Activated B cell treated with CpG ODN at 0.5 μM for 24 hours (primary cell): ENCODE measurements at regions of chr4 and their contacts with region 1.

Region 1: DNA sequence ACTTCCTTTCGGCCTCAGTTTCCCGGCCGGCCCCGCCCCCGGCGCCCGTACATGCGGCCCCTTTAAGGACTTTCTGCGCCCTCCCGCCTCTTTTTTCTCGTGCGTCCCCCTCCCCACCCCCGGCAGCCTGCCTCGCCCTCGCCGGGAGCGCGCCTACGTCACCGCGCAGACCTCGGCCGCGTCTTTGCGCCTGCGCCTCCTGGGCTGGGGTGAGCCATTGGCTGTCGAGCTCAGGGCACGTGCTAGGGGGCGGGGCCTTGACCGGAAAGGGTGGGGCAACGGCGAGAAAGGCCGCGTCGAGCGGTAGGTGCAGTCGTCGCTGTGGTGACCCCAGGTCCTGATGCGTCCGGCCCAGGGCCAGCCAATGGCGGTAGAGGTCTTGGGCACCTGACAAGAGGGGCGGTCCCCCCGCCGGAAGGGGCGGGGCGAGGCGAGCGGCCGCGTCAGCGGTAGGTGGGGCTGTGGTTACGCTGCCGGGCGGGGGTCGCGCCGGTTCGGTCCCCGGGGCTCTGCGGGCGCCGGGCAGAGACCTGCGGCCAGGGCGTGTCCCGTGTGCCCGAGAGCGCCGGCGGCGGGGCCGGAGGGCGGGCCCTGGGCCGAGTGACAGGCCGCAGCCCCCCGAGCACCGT is at the start of gene UVSSA:
- DNase-seq: peak; percentile 100
- ATAC-seq: peak; percentile 91
- H3K4me3 Mint-ChIP-seq: peak within 1 kb of the TSS; percentile 90
- H3K27ac Mint-ChIP-seq: peak within 1 kb of the TSS; percentile 84
- H3K4me1 Mint-ChIP-seq: peaks cover 33% of the 10 kb centered on the region
- H3K27me3 Mint-ChIP-seq: no peaks in the 10 kb centered on the region
- CTCF ChIP-seq: no peak
- total RNA-seq, gene UVSSA: 31.7 and 35.2 TPM in 2 replicates

Region 2: DNA sequence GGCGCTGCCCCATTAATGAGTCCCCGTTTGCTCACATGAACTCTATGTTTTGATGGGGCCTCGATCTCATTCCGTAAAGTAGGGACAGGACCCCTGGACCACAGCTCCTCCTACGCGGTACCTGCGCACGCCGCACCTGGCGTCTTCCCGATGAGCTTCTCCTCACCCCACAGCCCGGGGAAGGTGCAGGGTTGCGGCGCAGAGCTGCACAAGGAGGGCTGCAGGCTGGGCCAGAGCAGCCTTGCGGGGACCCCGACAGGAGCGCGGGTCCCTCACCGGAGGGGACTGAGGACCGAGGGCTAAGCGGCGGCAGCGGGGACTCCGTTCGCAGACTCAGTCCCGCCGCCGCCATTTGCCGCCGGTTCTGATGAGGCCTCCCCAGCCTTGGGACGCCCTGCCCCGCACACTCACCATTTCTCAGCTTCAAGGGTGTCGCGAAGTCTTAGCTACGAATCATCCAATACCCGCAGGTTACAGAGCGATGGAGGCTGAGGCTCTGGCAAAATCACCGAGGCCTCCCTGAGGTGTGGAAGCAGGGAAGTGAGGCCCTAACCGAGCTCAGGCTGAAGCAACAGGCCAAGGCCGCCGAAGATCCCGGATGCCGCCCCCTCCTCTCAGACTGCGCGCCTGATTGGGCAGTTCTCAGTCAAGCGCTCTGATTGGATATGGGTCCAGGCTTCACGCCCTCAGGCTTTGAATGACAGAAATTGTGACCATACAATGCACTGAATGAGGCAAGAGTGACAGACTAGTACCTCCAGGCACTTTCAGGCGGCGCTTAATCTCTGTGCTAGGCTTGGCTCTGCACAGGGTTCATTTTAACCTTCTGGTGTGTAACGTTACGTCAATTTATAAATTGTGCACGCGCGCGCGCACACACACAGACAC is 873.1 kb before region 1 on chr4:
- CTCF ChIA-PET with region 1: no interaction called
- POLR2A ChIA-PET with region 1: no interaction called
- intact Hi-C with region 1: loop called (anchors 10 kb)
- DNase-seq: peak; percentile 80
- ATAC-seq: peak; percentile 98
- H3K4me3 Mint-ChIP-seq: peak overlapping the region; percentile 99
- H3K27ac Mint-ChIP-seq: peak overlapping the region; percentile 99
- H3K4me1 Mint-ChIP-seq: peaks cover 37% of the 10 kb centered on the region
- H3K27me3 Mint-ChIP-seq: no peaks in the 10 kb centered on the region
- CTCF ChIP-seq: no peak

Region 3: DNA sequence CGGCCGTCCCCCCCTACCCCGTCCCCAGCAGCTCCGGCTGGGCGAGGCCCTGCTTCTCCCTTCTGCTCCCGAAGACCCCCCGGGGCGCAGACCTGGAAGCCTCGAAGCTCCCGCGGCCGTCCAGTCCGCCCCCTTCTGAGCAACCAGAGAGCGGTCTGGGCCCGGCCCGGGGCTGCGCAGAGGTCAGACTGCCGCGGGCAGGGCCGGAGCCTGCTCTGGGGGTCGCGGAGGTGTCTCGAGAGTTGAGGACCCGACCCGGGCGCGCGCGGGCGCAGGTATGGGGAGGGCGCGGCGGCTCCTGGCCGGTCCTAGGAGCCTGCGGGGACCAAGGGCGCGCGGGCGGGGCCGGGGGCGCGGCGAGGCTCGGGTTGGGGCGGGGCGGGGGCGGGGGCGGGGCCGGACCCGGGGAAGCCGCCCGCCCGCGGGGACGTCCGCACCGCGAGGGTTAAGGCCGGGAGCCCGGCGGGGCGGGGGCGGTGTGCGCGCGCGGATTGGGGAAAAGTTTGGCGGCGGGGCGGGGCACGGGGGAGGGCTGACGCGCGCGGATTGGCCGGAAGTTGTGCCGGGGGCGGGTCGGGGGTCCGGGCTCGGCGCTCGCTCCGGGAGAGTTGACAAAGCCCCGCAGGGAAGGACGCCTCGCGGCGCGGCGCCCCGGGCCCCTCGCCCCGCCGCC is 335.7 kb before region 1 on chr4 and contains the start of gene FGFRL1:
- CTCF ChIA-PET with region 1: no interaction called
- POLR2A ChIA-PET with region 1: no interaction called
- intact Hi-C with region 1: loop called (anchors 2 kb)
- DNase-seq: peak; percentile 88
- ATAC-seq: peak; percentile 69
- H3K4me3 Mint-ChIP-seq: peak within 1 kb of the TSS; percentile 86
- H3K27ac Mint-ChIP-seq: peak within 1 kb of the TSS; percentile 55
- H3K4me1 Mint-ChIP-seq: peaks cover 15% of the 10 kb centered on the region
- H3K27me3 Mint-ChIP-seq: peaks cover 18% of the 10 kb centered on the region
- CTCF ChIP-seq: no peak
- total RNA-seq, gene FGFRL1: 4.2 and 5.6 TPM in 2 replicates

Region 4: GRCh38 chr4:1218634-1219565 is 128.0 kb before region 1 on chr4:
- CTCF ChIA-PET with region 1: no interaction called
- POLR2A ChIA-PET with region 1: interaction called, 4 read pairs
- intact Hi-C with region 1: loop called (anchors 1 kb)
- DNase-seq: peak; percentile 41
- ATAC-seq: peak; percentile 88
- H3K4me3 Mint-ChIP-seq: peak overlapping the region; percentile 75
- H3K27ac Mint-ChIP-seq: peak overlapping the region; percentile 81
- H3K4me1 Mint-ChIP-seq: peaks cover 64% of the 10 kb centered on the region
- H3K27me3 Mint-ChIP-seq: no peaks in the 10 kb centered on the region
- CTCF ChIP-seq: no peak

Region 5: DNA sequence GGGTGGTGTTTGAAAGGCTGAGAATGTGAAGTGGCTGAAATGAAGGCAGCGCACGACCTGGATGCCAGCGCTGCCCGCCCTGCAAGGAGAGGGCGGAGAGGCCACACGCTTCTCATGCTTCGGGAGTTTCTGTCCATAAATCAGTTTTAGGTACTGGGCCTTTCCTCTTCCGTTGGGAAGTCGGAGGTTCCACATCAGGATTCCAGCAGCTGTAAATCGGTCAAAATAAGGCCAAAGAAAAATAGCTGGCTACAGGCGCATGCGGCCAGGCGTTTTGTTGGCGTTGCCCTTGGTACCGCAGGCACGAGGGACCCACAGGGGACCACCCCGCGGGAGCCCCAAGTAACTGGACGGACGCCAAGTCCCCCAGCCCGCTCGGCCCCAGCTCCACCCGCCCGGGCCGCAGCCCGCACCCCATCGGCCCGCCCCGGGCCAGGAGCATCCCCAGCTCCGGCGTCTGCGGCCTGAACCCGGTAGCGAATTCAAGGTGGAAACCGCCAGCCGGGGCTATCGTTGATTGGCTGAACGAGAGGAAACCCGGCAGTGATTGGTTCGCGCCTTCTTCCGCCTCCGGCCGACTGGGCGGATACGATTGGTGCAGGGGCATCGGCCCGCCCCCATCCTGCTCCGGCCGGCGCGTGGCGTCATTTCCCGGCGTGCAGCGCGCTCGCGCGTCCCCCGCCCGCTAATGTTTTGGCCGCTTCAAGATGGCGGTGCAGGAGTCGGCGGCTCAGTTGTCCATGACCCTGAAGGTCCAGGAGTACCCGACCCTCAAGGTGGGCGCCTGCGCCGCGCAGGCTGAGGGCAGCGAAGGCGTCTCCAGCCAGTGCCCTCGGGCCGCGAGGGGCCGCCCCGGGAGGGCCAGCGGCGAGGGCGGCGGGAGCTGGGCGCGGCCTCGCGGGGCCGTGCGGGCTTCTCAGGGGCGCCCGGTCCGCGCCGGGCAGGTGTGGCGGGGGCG is 57.4 kb before region 1 on chr4 and contains the start of gene MAEA:
- CTCF ChIA-PET with region 1: no interaction called
- POLR2A ChIA-PET with region 1: interaction called, 28 read pairs
- intact Hi-C with region 1: loop called (anchors 1 kb)
- DNase-seq: peak; percentile 95
- ATAC-seq: peak; percentile 96
- H3K4me3 Mint-ChIP-seq: peak within 1 kb of the TSS; percentile 90
- H3K27ac Mint-ChIP-seq: peak within 1 kb of the TSS; percentile 81
- H3K4me1 Mint-ChIP-seq: peaks cover 44% of the 10 kb centered on the region
- H3K27me3 Mint-ChIP-seq: no peaks in the 10 kb centered on the region
- CTCF ChIP-seq: no peak
- total RNA-seq, gene MAEA: 67.3 and 73.7 TPM in 2 replicates

Region 6: GRCh38 chr4:1879485-1879884 is 532.6 kb after region 1 on chr4:
- CTCF ChIA-PET with region 1: no interaction called
- POLR2A ChIA-PET with region 1: no interaction called
- intact Hi-C with region 1: no loop called
- DNase-seq: no peak
- ATAC-seq: no peak
- H3K4me3 Mint-ChIP-seq: no peak overlapping the region
- H3K27ac Mint-ChIP-seq: no peak overlapping the region
- H3K4me1 Mint-ChIP-seq: peaks cover 23% of the 10 kb centered on the region
- H3K27me3 Mint-ChIP-seq: no peaks in the 10 kb centered on the region
- CTCF ChIP-seq: no peak

Region 7: DNA sequence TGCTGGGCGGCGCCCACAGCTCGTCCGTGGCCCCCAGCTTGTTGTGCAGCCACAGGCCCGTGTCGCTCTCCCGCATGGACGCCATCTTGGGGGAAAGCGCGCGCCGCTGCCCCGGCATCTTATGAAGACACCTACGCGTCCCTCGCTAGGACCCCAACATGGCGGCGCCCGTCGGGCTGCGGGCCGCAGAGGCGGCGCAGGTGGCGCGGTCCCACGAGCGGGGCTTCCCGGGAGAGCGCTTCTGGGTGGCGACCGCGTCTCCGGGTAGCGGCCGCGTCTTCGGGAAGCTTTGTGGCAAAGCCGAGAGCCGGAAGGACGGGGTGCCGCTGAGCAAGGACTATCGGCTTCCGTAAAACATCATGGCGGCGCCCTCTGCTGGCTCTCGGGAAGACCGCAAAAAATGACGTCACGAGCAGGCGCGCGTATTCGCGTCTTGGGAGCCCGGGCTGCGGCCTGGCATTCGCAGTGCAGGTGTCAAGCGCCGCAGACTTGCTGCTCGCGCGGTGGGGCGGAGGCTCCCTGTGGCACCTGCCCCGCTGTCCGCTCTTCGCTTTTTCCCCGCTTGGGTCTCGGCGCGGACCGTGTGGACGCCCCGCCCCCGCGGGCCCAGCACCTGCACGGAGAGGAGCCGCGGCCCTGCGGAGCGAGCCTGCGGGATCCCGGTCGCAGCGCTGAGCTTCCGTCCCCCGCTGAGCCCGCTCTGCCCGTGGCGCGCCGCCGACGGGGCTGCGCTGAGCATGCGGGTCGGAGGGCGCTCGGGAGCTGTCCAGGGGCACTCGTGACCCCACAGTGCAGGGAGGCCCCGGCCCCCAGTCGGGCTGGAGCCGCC is 662.2 kb after region 1 on chr4 and contains the start of gene NELFA:
- CTCF ChIA-PET with region 1: no interaction called
- POLR2A ChIA-PET with region 1: interaction called, 5 read pairs
- intact Hi-C with region 1: loop called (anchors 5 kb)
- DNase-seq: peak; percentile 93
- ATAC-seq: peak; percentile 80
- H3K4me3 Mint-ChIP-seq: peak within 1 kb of the TSS; percentile 90
- H3K27ac Mint-ChIP-seq: peak within 1 kb of the TSS; percentile 91
- H3K4me1 Mint-ChIP-seq: peaks cover 32% of the 10 kb centered on the region
- H3K27me3 Mint-ChIP-seq: peaks cover 4% of the 10 kb centered on the region
- CTCF ChIP-seq: no peak
- total RNA-seq, gene NELFA: 44.7 and 49.9 TPM in 2 replicates